GM10248 (cell line): ENCODE measurements at regions of chr7 and their contacts with region 1.

Region 1: GRCh38 chr7:22377703-22378102 is 20.7 kb upstream of the RAPGEF5 start:
- DNase-seq: no peak
- CTCF ChIP-seq: no peak

Region 2: GRCh38 chr7:22361795-22362194 is 15.9 kb before region 1 on chr7:
- CTCF ChIA-PET with region 1: interaction called, 23 read pairs
- POLR2A ChIA-PET with region 1: no interaction called
- DNase-seq: no peak
- CTCF ChIP-seq: no peak